Posterior cingulate gyrus (tissue), 11 donors: ENCODE measurements at regions of chr11 and their contacts with region 1.

Region 1: GRCh38 chr11:83071567-83072349 is at the start of gene RAB30:
- DNase-seq: peak; percentile 96 to 100 (median 98)

Region 2: DNA sequence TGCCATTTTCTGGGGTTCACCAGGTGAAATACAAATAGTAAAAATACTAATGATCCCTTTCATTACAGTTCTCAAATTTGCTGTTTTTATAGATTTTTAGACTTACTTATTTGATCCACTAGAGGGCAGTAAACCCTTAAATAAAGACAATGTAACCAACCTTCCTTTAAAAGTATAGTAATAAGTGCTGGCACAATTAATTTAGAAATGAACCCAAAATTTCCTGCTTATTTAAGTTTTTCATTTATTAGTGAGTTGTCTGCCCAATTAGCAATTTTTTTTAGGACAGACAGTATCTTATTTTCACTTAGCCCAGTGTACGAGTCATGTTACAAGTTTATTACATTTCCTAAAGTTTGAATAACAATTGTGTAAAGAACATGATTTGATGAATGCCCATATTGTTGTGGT is 165.5 kb before region 1 on chr11:
- intact Hi-C with region 1: loop called (anchors 5 kb)
- DNase-seq: no peak

Region 3: DNA sequence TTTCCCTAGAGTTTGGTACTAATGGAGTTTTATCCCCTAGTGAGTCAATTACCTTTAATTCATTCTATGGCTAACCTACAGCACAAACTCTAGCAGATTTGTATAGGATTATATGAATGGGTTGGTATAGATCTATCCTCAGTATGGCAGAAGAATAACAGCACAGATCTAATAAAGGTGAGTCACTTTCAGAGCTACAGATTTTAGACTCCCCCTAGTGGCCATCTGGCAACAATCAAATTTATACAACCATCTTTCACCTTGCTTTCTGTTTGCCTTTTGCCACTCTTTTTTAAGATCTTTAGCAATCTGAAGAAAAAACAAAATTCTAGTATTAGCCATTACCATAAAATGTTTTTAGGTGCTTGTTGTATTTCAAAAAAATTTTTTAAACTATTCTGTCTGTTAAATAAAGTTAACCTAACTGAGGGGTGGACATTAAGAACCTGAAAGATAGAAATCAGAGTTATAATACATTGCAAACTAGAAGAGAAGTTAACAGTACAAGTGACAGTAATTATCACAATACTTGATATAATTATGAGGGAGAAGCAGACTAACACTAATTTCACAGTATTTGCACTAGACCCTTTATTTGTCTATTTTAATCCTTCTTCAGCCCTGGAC is 144.4 kb before region 1 on chr11:
- intact Hi-C with region 1: loop called (anchors 2 kb)
- DNase-seq: no peak

Region 4: GRCh38 chr11:82988936-82989627 is 82.7 kb before region 1 on chr11:
- intact Hi-C with region 1: loop called (anchors 1 kb)
- DNase-seq: peak in 8 of 10 donors; percentile 40 to 94 (median 61)

Region 5: DNA sequence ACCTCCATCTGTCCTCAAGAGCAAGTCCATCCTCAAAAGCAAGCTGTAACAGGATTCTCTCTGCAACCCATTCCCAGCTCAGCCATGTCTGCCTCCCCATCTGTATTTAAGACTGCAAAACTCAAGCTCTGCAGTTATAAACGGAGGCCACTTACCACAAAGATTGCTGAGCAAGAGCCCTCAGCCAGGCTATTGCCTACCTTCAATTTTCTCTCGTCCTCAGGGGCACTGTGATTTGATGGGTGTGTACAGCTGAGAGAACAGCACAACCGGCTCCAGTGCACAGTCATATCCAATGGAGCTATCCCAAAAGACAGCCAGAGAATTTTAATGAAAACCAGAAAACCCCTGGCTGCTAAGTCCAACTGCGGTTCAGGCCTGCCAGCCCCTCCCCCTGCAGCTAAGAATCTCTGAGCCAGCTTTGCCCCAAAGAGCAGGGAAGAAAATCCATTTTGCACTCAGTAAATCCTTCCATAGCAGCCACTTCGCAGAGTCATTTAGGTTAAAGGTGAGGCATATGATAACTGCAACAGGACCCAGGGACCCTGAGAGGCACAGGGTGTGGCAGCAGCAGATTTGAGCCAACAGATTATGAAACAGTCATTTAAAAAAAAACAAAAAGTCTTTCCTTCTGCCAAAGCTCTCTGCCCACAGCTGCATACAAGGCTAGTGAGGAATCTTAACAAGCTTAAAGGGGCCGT is 37.6 kb before region 1 on chr11:
- intact Hi-C with region 1: loop called (anchors 5 kb)
- DNase-seq: peak in 8 of 10 donors; percentile 21 to 87 (median 35)

Region 6: DNA sequence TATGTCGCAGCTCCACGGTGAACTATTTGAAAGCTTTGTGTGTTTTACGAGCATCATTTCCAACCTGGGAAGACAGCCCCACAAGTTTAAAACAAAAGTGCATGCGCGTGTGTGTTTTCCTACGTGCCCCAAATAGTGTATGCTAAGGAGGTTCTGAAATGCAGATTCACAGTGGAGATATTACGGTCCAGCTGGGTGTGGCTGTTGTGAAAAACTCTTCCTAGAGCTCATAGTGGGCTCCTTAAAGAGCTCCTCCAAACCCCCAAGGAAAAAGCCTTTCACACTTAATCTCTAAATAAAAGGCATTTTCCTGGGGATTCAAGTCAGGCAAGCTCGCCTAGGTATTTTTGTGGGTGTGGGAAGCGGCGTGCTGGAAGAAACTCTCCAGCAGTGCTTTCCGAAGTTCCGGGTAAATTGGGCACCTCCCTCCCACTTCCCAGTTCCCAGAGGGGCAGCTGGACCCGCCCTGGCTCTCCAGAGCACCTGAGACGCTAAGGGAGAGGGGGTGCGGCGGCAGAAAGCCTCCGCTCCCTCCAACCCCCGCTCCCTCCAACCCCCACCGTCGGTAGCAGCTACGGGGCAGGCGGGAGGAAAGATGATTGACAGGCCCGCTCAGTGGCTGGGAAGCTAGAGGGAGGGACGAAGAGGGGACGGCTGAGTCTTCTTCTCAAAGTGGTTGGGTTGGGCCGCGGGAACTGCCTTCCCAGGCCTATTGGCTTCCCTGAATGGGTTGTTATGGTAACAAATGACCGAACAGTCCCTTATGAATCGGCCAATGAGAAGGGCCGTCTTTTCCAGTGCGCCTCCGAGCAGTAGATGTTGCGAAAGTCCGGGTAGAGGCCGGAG is 84.6 kb after region 1 on chr11:
- intact Hi-C with region 1: loop called (anchors 2 kb)
- DNase-seq: peak; percentile 96 to 100 (median 98)

Region 7: GRCh38 chr11:83181815-83182214 is 110.1 kb after region 1 on chr11:
- intact Hi-C with region 1: no loop called
- DNase-seq: no peak

Region 8: GRCh38 chr11:83193315-83194280 is 121.8 kb after region 1 on chr11 and contains the start of gene ANKRD42:
- intact Hi-C with region 1: loop called (anchors 1 kb)
- DNase-seq: peak; percentile 85 to 99 (median 93)

Region 9: DNA sequence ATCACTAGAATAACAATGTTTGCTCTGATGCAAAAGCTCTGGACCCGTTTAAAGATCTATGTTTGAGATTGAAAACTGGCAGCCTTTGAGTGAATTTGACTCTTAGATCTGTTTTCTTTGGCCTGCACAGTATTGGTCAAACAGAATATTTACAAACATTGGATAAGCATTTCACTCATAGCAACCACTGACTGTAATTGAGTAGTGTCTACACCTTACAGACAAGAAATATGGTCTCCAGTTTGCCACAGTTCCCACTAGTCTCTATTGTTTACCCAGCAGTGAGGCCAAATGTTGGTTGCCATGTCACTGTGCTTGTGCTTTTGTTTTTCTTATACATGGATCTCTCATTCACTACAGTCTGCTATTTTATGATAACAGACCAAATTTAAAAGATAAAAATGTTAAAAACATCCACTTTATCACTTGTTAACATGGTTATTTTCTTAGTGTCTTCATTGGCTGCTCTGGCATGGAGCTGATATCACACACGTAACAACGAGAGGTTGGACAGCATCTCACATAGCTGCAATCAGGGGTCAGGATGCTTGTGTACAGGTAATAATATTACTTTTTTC is 133.9 kb after region 1 on chr11:
- intact Hi-C with region 1: no loop called
- DNase-seq: no peak